Left colon (tissue), 2 donors: ENCODE measurements at regions of chr5 and their contacts with region 1.

Region 1: DNA sequence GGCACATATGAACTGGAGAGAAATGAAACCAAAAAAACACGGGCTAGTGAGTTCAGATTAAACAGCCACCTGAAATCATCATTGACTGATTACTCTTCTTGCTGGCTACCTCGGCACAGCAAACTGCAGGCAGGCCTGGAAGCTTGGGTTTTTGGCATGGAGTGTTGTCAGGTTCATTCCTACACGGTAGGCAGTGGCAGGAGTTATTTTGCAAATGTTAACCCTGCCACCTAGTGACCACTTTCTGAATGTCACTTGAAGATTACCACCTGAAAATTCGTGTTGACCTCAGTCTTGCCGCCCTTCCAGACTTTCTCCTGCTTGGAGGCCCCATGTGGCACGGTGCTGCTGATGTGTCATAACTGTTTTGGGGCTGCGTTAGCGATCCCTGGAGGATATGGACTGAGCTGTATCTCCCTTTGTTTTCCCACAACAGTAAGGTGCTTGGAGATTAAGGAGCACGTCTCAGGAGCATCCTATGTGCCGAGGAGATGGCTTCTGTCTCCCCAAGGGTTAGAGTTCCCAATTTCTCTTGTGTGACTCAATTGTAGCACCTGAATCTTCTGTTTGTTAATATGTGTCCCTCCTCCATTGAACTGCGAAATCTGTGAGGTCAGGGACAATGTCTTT is 12.7 kb upstream of the CD180 start:
- DNase-seq: peak; percentile 47 to 51
- ATAC-seq: peak; percentile 85

Region 2: GRCh38 chr5:66814146-66814991 is 394.9 kb before region 1 on chr5:
- intact Hi-C with region 1: loop called in 1 of 2 experiments (anchors 5 kb)
- DNase-seq: peak in 1 of 2 donors; percentile 26
- ATAC-seq: peak; percentile 65

Region 3: DNA sequence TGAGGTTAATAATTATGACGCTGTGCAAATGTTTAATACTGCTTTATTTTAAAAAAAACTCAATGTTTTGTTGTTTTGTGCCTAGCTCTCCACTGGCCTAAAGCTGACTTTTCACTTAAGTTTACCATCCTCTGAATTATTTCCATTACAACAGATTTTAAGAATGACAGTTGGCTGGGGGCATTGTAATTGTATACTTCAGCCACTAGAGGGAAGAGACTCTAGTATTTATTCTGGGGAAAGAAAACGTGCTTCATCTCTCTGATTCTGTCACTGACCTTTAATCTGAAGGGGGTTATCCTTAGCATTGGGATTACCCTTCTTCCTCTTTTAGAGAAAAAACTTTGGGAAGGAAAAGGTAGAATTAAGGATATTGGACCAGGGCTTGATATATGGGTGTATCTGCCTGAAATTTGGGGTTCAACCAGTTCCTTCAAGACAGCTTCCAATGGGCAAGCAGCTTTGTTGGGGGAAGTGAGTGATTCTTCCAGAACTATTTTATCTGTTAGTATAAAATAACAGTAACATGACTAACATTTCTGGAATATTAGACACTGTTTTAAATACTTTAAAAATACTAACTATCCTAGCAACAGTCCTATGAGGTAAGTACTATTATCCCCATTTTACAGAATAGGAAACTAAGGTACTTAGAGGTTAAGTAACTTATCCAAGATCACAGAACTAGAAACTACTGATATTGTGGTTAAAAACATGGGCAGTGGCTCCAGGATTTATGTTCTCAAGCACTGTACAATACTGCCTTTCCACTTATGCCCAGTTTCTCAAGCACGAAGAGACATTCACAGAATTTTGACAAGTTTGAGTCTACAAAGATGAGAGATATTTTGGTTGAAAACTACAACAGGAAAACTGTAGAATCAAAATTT is 221.1 kb before region 1 on chr5:
- intact Hi-C with region 1: no loop called
- DNase-seq: no peak
- ATAC-seq: no peak

Region 4: GRCh38 chr5:67165526-67166459 is 43.5 kb before region 1 on chr5:
- intact Hi-C with region 1: loop called in 1 of 2 experiments (anchors 2 kb)
- DNase-seq: peak; percentile 86 to 92
- ATAC-seq: peak; percentile 91